BJ (cell line): ENCODE measurements at regions of chr17 and their contacts with region 1.

Region 1: GRCh38 chr17:64506576-64507477 is at the start of gene CEP95:
- DNase-seq: peak; percentile 80
- H3K4me3 ChIP-seq: peak within 1 kb of the TSS; percentile 99
- H3K27me3 ChIP-seq: no peaks in the 10 kb centered on the region
- CTCF ChIP-seq: no peak
- polyA plus RNA-seq, gene CEP95: 17.6 and 26.3 TPM in 2 replicates

Region 2: GRCh38 chr17:64520359-64520758 is 13.5 kb after region 1 on chr17:
- CTCF ChIA-PET with region 1: interaction called, 10 read pairs
- POLR2A ChIA-PET with region 1: interaction called, 3 read pairs
- DNase-seq: no peak
- H3K4me3 ChIP-seq: no peak overlapping the region
- H3K27me3 ChIP-seq: no peaks in the 10 kb centered on the region
- CTCF ChIP-seq: no peak

Region 3: DNA sequence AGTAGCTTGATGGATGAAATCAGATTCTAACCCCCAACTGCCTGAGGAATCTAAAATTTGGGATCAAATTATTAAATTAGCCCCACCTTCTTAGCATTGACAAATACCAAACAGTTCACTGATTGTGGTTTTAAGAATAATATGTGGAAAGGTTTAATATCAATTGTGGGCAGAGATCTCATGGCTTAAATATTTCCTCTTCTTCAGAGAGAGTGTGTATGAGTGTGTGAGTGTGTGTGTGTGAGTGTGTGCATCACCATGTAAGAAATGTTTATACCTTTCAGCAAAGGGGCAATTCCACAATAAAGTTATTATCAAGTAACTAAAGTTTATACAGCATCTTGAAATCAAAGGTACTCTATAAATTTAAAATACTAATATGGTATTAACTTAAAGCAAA is 152.1 kb after region 1 on chr17:
- CTCF ChIA-PET with region 1: no interaction called
- POLR2A ChIA-PET with region 1: interaction called, 20 read pairs
- DNase-seq: peak; percentile 31
- H3K4me3 ChIP-seq: peak overlapping the region; percentile 16; the same call in 1 of the 2 replicates
- H3K27me3 ChIP-seq: no peaks in the 10 kb centered on the region
- CTCF ChIP-seq: no peak